OCI-LY7 (cell line): ENCODE measurements at regions of chr19 and their contacts with region 1.

Region 1: GRCh38 chr19:27679905-27680304 is 1533.0 kb downstream of the UQCRFS1 start:
- DNase-seq: no peak
- H3K4me3 ChIP-seq: no peak overlapping the region
- H3K27ac ChIP-seq: no peak overlapping the region
- H3K4me1 ChIP-seq: no peaks in the 10 kb centered on the region
- CTCF ChIP-seq: no peak

Region 2: GRCh38 chr19:27720155-27720554 is 40.2 kb after region 1 on chr19:
- CTCF ChIA-PET with region 1: no interaction called
- POLR2A ChIA-PET with region 1: no interaction called
- intact Hi-C with region 1: no loop called
- DNase-seq: no peak
- H3K4me3 ChIP-seq: no peak overlapping the region
- H3K27ac ChIP-seq: no peak overlapping the region
- H3K4me1 ChIP-seq: no peaks in the 10 kb centered on the region
- CTCF ChIP-seq: no peak

Region 3: GRCh38 chr19:27833031-27833430 is 153.1 kb after region 1 on chr19:
- CTCF ChIA-PET with region 1: no interaction called
- POLR2A ChIA-PET with region 1: no interaction called
- intact Hi-C with region 1: no loop called
- DNase-seq: no peak
- H3K4me3 ChIP-seq: no peak overlapping the region
- H3K27ac ChIP-seq: no peak overlapping the region
- H3K4me1 ChIP-seq: no peaks in the 10 kb centered on the region
- CTCF ChIP-seq: no peak

Region 4: GRCh38 chr19:28316463-28316862 is 636.6 kb after region 1 on chr19:
- CTCF ChIA-PET with region 1: no interaction called
- POLR2A ChIA-PET with region 1: no interaction called
- intact Hi-C with region 1: loop called (anchors 5 kb)
- DNase-seq: no peak
- H3K4me3 ChIP-seq: no peak overlapping the region
- H3K27ac ChIP-seq: no peak overlapping the region
- H3K4me1 ChIP-seq: no peaks in the 10 kb centered on the region
- CTCF ChIP-seq: no peak